Activated T-helper 1 cell treated with anti-CD3 and anti-CD28 coated beads, Interleukin-12 subunit alpha, Interleukin-12 subunit beta, Interleukin-2, Interleukin-4 antibody, amounts not matched to agents 30 ng/mL and 10 ng/mL and 1 ng/mL, durations not matched to agents 14 hours and 24 hours and 36 hours (primary cell): ENCODE measurements at regions of chr7 and their contacts with region 1.

Region 1: GRCh38 chr7:134316539-134317344 is at the start of gene SLC35B4:
- DNase-seq: peak; percentile 91
- H3K4me3 Mint-ChIP-seq: peak within 1 kb of the TSS; percentile 93
- H3K27ac Mint-ChIP-seq: peak within 1 kb of the TSS; percentile 89
- H3K4me1 Mint-ChIP-seq: peaks cover 17% of the 10 kb centered on the region
- H3K27me3 Mint-ChIP-seq: no peaks in the 10 kb centered on the region
- total RNA-seq, gene SLC35B4: 22.4 and 23.3 TPM in 2 replicates

Region 2: DNA sequence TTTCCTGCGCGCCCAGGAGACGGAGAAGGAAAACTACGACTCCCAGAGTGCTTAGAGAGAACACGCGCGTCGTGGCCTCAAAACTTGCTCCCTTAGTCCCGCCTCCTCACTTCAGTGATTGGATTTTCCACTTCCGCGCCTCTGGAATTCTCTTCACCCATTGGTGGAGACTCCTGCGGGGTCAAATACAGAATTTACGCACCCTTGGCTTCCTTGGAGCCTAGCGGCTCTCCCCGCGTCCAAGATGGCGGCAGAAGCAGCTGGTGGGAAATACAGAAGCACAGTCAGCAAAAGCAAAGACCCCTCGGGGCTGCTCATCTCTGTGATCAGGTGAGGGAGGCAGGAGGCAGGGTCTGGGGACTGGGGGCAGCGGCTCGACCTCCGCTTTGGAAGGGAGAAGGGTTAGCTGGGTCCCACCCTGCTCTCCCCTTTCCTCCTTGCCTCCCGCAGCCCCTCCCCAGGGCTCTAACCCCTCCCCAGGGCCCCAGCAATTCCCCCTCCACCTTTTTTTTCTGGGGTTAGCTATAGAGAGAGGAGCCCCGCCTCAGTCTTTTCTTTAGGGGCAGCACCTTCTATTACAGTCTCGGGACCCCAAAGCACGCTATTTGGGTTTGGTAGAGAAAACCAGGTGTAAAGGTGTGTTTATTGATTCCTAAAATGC is 1063.8 kb before region 1 on chr7 and contains the start of gene EXOC4:
- intact Hi-C with region 1: loop called (anchors 1 kb)
- DNase-seq: peak; percentile 92
- H3K4me3 Mint-ChIP-seq: peak within 1 kb of the TSS; percentile 97
- H3K27ac Mint-ChIP-seq: peak within 1 kb of the TSS; percentile 93
- H3K4me1 Mint-ChIP-seq: peaks cover 43% of the 10 kb centered on the region
- H3K27me3 Mint-ChIP-seq: peaks cover 2% of the 10 kb centered on the region
- total RNA-seq, gene EXOC4: 51.6 and 58.6 TPM in 2 replicates

Region 3: DNA sequence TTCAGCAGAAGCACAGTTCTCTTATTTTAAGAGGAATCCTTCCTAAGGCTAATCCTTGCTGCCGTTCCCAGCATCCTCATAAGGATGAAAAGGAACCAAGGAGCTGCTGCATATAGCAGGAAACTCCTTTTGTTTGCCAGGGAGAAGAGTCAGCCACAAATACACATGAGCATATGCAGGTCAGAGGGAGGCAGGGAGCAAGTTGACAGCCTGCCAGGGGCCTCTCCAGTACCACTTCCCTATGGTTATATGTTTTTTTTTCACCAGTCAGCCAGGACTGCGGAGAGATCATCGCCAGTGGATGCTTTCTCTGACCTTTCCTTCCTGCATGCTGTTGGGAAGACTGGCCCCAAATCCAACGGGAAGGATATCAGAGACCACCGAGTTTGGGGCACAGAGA is 39.8 kb before region 1 on chr7:
- intact Hi-C with region 1: no loop called
- DNase-seq: no peak
- H3K4me3 Mint-ChIP-seq: no peak overlapping the region
- H3K27ac Mint-ChIP-seq: no peak overlapping the region
- H3K4me1 Mint-ChIP-seq: no peaks in the 10 kb centered on the region
- H3K27me3 Mint-ChIP-seq: peaks cover 15% of the 10 kb centered on the region

Region 4: GRCh38 chr7:134293002-134293740 is 23.6 kb before region 1 on chr7:
- intact Hi-C with region 1: no loop called
- DNase-seq: no peak
- H3K4me3 Mint-ChIP-seq: no peak overlapping the region
- H3K27ac Mint-ChIP-seq: no peak overlapping the region
- H3K4me1 Mint-ChIP-seq: no peaks in the 10 kb centered on the region
- H3K27me3 Mint-ChIP-seq: no peaks in the 10 kb centered on the region

Region 5: DNA sequence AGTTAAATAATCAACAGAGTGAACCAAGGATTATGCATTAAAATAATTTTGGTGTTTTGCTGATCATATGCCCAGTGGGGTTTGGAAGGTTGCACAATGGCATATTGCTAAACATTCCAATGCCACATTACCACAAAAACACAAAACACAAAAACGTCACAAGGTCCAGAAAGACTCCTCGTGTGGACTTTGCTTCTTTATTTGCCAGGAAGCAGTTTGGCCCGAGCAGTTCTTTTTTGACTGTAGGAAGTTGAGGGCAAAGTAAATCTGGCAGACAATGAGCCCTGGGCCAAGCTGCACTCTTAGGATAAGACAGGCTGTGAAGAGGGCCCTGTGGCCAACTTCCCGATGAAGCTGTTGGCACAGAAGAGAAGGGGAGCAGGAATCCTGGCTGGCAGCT is 39.2 kb after region 1 on chr7:
- intact Hi-C with region 1: loop called (anchors 2 kb)
- DNase-seq: no peak
- H3K4me3 Mint-ChIP-seq: no peak overlapping the region
- H3K27ac Mint-ChIP-seq: no peak overlapping the region
- H3K4me1 Mint-ChIP-seq: peaks cover 5% of the 10 kb centered on the region
- H3K27me3 Mint-ChIP-seq: peaks cover 3% of the 10 kb centered on the region

Region 6: DNA sequence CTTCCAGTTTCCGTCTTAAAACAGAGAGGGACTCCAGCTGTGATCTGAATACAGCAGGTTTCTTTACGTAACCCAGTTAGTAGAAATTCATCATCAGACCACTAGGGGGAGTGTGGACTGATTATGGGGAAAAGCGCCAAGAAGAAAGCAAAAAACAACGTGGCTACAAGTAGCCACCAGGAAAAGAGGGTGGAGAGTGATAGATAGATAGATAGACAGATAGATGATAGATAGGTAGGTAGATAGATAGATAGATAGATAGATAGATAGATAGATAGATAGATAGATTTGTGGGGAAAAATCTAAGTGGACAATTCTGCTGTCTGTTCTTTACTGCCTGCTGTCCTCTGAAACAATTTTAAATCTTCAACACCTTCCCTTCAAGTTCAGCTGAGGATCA is 197.9 kb after region 1 on chr7:
- intact Hi-C with region 1: loop called (anchors 2 kb)
- DNase-seq: no peak
- H3K4me3 Mint-ChIP-seq: no peak overlapping the region
- H3K27ac Mint-ChIP-seq: no peak overlapping the region
- H3K4me1 Mint-ChIP-seq: peaks cover 16% of the 10 kb centered on the region
- H3K27me3 Mint-ChIP-seq: peaks cover 12% of the 10 kb centered on the region

Region 7: DNA sequence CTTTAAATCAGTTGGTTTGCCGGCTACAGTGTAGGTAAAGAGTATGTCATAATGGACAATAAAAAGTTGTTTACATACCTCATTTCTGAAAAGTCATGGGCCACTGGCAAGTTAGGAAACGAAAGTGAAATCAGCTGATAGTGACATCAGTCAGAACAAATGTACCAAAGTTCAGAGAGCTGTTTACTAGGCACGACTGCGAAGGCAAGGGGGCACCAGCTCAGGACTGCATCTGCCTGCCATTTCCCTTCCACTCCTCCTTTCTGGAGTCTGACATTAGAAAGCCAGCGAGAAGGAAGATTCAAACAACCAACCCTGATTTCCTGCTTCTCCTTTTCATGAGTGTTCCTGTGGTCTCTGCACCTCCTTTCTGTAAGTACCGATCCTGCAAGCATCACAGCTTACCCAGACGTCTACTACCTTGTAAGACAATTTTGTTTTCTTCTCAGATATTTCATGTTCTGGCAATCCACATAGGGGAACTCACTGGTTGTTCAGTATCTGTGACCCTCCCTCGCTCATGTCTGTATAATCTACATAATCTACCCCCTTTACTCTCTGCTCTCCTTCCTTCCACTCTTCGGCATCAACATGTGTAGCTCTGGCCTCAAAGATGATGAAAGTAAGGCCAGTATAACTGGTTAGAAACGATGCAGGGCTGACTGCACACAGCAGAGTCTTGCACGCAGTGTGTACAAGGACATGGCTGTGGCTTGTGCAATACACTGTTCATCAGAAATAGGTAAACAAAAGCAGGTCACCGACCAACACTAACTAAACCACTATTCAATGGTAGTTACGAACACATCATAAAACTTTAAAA is 831.4 kb after region 1 on chr7 and contains the start of gene TMEM140:
- intact Hi-C with region 1: loop called (anchors 2 kb)
- DNase-seq: peak; percentile 61
- H3K4me3 Mint-ChIP-seq: peak within 1 kb of the TSS; percentile 88
- H3K27ac Mint-ChIP-seq: peak within 1 kb of the TSS; percentile 96
- H3K4me1 Mint-ChIP-seq: peaks cover 60% of the 10 kb centered on the region
- H3K27me3 Mint-ChIP-seq: no peaks in the 10 kb centered on the region
- total RNA-seq, gene TMEM140: 2.9 and 4.5 TPM in 2 replicates

Region 8: DNA sequence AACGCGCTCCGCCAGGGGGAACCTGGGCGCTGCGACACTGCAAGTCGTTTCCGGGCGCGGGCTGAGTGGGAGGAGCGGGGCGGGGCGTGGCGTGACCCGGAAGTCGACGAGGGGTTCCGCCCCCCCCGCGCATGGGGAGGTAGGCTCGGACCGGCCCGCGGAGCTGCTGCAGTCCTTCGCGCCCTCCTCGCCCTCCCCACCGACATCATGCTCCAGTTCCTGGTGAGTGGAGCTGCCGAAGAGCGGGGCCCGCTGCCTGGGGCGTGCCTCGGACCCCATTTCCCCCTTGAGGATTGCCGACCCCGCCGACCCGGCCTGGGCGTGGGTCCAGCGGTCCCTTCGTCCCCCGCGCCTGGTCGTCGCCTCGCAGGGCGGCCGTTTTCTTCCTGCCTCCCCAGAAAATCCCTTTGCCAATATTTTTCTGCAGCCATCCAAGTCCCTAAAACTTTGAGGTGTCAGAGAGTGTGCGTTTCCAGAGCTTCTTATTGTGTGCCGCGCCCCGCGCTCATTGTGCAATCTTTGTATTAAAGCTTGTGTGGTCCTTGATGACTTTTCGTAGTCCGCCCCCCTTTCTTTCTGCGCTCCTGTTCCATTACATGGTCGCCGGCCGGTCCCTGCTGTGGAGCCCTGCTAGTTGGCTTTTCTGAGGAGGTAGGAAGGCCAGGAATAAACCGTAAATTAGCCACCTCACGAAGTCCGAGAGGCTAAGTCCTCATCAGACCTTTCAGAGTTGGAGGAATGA is 1345.8 kb after region 1 on chr7 and contains the start of gene STMP1:
- intact Hi-C with region 1: loop called (anchors 5 kb)
- DNase-seq: peak; percentile 93
- H3K4me3 Mint-ChIP-seq: peak within 1 kb of the TSS; percentile 97
- H3K27ac Mint-ChIP-seq: peak within 1 kb of the TSS; percentile 93
- H3K4me1 Mint-ChIP-seq: peaks cover 22% of the 10 kb centered on the region
- H3K27me3 Mint-ChIP-seq: no peaks in the 10 kb centered on the region
- total RNA-seq, gene STMP1: 22.7 and 24.7 TPM in 2 replicates